HepG2 (cell line): ENCODE measurements at regions of chr17 and their contacts with region 1.

Region 1: GRCh38 chr17:16415031-16415924 is at the start of gene TRPV2:
- DNase-seq: peak; percentile 59
- ATAC-seq: peak; percentile 84
- H3K4me3 ChIP-seq: peak within 1 kb of the TSS; percentile 62 to 78 (median 74)
- H3K27ac ChIP-seq: peak within 1 kb of the TSS; percentile 64
- H3K4me1 ChIP-seq: peaks cover 53% of the 10 kb centered on the region
- H3K27me3 ChIP-seq: no peaks in the 10 kb centered on the region
- CTCF ChIP-seq: peak; percentile 90
- EP300 ChIP-seq: no peak
- POLR2A ChIP-seq: 0 out of 4 replicates have a peak, but pooled peaks of 1 of the 2 experiments have one; percentile 35
- RAD21 ChIP-seq: peak; percentile 79
- total RNA-seq, gene TRPV2: 7.3 and 13.6 TPM in 2 replicates

Region 2: DNA sequence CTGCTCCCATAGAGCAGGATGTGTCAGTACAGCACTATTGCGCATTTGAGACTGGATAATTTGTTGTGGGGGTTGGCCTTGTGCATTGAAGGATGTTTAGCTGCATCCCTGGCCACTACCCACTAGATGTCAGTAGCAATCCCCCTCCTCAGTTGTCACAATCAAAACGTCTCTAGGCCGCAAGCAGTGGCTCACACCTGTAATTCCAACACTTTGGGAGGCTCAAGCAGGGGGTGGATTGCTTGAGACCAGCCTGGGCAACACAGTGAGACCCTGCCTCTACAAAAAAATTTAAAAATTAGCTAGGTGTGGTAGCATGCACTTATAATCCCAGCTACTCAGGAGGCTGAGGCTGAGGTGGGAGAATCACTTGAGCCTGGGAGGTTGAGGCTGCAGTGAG is 110.4 kb before region 1 on chr17:
- CTCF ChIA-PET with region 1: no interaction called
- POLR2A ChIA-PET with region 1: no interaction called
- in situ Hi-C with region 1: no loop called
- intact Hi-C with region 1: loop called (anchors 1 kb)
- DNase-seq: peak; percentile 63
- ATAC-seq: peak; percentile 86
- H3K4me3 ChIP-seq: no peak overlapping the region
- H3K27ac ChIP-seq: no peak overlapping the region
- H3K4me1 ChIP-seq: peaks cover 79% of the 10 kb centered on the region
- H3K27me3 ChIP-seq: no peaks in the 10 kb centered on the region
- CTCF ChIP-seq: peak; percentile 86
- EP300 ChIP-seq: no peak
- POLR2A ChIP-seq: no peak
- RAD21 ChIP-seq: peak; percentile 88

Region 3: GRCh38 chr17:16363749-16364536 is 51.3 kb before region 1 on chr17:
- CTCF ChIA-PET with region 1: interaction called, 15 read pairs
- POLR2A ChIA-PET with region 1: interaction called, 4 read pairs
- in situ Hi-C with region 1: loop called (anchors 10 kb)
- intact Hi-C with region 1: loop called (anchors 1 kb)
- DNase-seq: peak; percentile 66
- ATAC-seq: peak; percentile 93
- H3K4me3 ChIP-seq: no peak overlapping the region
- H3K27ac ChIP-seq: no peak overlapping the region
- H3K4me1 ChIP-seq: peaks cover 38% of the 10 kb centered on the region
- H3K27me3 ChIP-seq: no peaks in the 10 kb centered on the region
- CTCF ChIP-seq: peak; percentile 86
- EP300 ChIP-seq: no peak
- POLR2A ChIP-seq: no peak
- RAD21 ChIP-seq: peak; percentile 74

Region 4: DNA sequence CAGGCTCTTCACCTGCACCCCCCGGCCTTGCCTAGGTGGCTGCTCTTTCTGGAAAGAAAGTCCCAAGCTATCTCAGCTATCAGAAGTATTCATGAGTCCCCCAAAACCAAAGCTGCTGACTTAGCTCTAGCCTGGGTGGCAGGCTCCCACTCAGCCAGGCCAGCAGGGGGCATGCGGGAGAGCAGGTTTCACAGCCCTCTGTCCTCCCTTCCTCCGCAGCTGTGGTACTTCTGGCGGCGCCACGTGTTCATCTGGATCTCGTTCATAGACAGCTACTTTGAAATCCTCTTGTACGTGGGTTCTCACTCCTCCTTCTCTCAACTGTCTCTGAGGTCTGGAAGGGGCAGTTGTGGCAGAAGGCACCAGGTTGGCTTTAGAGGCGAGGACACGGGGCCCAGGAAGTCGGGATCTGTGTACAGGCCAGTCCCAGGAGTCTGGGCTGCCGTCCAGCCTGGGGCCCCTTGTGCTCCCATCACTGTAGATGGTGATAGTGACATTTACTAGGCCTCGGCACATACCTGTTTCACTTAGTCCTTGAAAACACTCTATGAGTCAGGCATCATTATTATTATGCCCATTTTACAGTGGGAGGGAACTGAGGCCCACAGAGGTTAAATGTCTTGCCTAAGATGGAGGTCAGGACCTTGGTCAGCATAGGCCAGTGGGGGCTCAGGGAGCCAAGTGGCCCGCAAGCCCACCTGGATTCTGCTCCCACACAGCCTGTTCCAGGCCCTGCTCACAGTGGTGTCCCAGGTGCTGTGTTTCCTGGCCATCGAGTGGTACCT is 13.0 kb after region 1 on chr17:
- CTCF ChIA-PET with region 1: no interaction called
- POLR2A ChIA-PET with region 1: interaction called, 11 read pairs
- in situ Hi-C with region 1: no loop called
- intact Hi-C with region 1: no loop called
- DNase-seq: peak; percentile 64
- ATAC-seq: peak; percentile 87
- H3K4me3 ChIP-seq: no peak overlapping the region
- H3K27ac ChIP-seq: no peak overlapping the region
- H3K4me1 ChIP-seq: peaks cover 37% of the 10 kb centered on the region
- H3K27me3 ChIP-seq: no peaks in the 10 kb centered on the region
- CTCF ChIP-seq: peak; percentile 88
- EP300 ChIP-seq: no peak
- POLR2A ChIP-seq: no peak
- RAD21 ChIP-seq: peak; percentile 57; the same call in 1 of the 2 replicates